PC-9 (cell line): ENCODE measurements at regions of chr4 and their contacts with region 1.

Region 1: GRCh38 chr4:140851032-140851636 is 94.9 kb upstream of the TBC1D9 start:
- DNase-seq: peak; percentile 41 to 43
- H3K4me3 ChIP-seq: no peak overlapping the region
- H3K27ac ChIP-seq: no peak overlapping the region
- H3K4me1 ChIP-seq: peaks cover 2% of the 10 kb centered on the region
- H3K27me3 ChIP-seq: no peaks in the 10 kb centered on the region
- CTCF ChIP-seq: peak; percentile 84

Region 2: DNA sequence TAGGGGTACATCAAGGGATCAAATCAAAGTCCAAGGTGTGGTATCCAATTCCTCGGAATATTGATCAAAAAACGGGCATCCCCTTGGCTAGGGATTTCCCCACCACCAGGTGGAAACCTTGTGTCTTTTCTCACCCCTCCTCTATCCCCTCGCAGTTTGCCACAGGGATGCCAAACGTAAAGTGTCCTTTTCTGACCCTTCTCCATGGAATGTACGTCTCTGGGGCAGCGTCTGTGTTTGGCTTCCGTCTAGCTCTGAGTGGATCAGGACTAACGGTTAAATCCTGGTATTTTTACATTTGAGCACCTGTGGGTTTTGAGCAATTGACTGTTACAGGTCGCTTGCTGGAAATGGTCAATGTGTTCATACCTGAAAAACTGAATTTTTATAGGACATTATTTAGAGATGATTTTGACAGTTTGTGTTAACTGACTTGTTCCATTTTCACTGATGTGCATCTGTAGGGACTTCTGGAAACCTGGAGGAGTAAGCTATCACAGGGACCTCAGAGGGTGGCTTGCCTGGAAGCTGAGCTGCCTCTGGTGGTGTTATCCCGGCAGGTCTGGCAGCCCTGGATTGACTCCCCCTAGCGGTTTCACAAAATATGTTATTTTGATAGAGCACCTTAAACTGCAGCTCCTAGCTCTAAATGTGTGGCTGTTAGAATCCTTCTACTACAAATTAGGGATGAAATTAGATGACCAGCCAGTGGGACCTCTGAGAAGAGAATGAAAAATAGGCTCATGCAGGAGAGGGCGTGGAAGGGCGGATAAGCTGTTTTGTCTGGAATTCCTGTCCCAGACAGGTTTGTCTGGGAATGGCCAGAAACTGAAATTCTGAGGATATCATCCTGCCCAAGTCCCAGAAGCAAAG is 1194.3 kb before region 1 on chr4:
- CTCF ChIA-PET with region 1: no interaction called
- POLR2A ChIA-PET with region 1: no interaction called
- intact Hi-C with region 1: loop called (anchors 1 kb)
- DNase-seq: peak in 1 of 2 experiments; percentile 53
- H3K4me3 ChIP-seq: no peak overlapping the region
- H3K27ac ChIP-seq: no peak overlapping the region
- H3K4me1 ChIP-seq: peaks cover 19% of the 10 kb centered on the region
- H3K27me3 ChIP-seq: no peaks in the 10 kb centered on the region
- CTCF ChIP-seq: peak; percentile 85

Region 3: GRCh38 chr4:140252742-140253555 is 598.2 kb before region 1 on chr4:
- CTCF ChIA-PET with region 1: no interaction called
- POLR2A ChIA-PET with region 1: no interaction called
- intact Hi-C with region 1: loop called (anchors 10 kb)
- DNase-seq: peak; percentile 40 to 76
- H3K4me3 ChIP-seq: peak overlapping the region; percentile 59
- H3K27ac ChIP-seq: peak overlapping the region; percentile 73
- H3K4me1 ChIP-seq: peaks cover 69% of the 10 kb centered on the region
- H3K27me3 ChIP-seq: no peaks in the 10 kb centered on the region
- CTCF ChIP-seq: peak; percentile 84

Region 4: GRCh38 chr4:140595065-140595464 is 256.1 kb before region 1 on chr4:
- CTCF ChIA-PET with region 1: interaction called, 5 read pairs
- POLR2A ChIA-PET with region 1: no interaction called
- intact Hi-C with region 1: loop called (anchors 1 kb)
- DNase-seq: peak; percentile 40 to 46
- H3K4me3 ChIP-seq: no peak overlapping the region
- H3K27ac ChIP-seq: no peak overlapping the region
- H3K4me1 ChIP-seq: no peaks in the 10 kb centered on the region
- H3K27me3 ChIP-seq: no peaks in the 10 kb centered on the region
- CTCF ChIP-seq: peak; percentile 67

Region 5: DNA sequence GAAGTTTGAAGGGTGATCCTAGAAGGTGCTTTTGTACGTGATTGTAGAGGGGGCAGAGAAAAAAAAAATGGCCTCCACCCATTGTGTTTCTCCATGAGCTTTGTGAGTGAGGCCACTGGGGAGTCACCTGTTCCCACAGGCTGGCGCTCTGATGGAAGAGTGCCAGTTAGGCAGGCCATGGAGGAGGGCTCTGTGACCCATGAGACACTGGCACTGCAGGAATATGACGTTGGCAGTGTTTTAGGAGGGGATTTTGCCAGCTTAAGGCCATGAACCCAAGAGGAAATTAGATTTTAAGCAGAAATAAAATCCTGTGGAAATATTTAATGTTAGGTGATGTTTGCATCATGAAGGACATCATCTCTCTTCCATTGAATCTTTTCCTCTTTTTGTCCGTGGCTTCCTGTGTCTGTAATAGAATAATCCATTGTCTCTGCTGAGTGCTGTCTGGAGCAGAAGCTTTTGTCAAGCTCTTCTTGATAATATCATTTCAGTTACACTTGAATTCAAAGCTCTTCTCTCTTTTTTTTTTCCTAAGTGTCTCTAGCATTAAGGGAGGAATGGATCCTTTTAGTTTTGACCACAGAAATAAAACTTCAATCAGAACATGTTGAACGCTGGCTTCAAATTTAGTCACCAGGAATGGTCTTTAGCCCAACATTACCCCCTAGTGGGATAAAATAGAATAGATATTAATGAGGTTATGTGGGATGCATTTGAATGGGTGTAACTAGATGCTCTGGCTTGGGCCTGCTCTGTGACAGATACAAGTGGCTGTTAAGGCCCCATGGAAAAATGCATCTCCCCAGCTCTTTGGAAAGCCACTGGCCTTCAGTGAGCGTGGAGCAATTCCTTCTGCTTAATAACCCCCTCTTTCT is 241.3 kb before region 1 on chr4:
- CTCF ChIA-PET with region 1: no interaction called
- POLR2A ChIA-PET with region 1: no interaction called
- intact Hi-C with region 1: loop called (anchors 5 kb)
- DNase-seq: no peak
- H3K4me3 ChIP-seq: no peak overlapping the region
- H3K27ac ChIP-seq: no peak overlapping the region
- H3K4me1 ChIP-seq: no peaks in the 10 kb centered on the region; the same call in 1 of the 2 replicates
- H3K27me3 ChIP-seq: no peaks in the 10 kb centered on the region
- CTCF ChIP-seq: peak; percentile 68

Region 6: GRCh38 chr4:140637836-140638235 is 213.3 kb before region 1 on chr4:
- CTCF ChIA-PET with region 1: interaction called, 10 read pairs
- POLR2A ChIA-PET with region 1: no interaction called
- intact Hi-C with region 1: loop called (anchors 5 kb)
- DNase-seq: no peak
- H3K4me3 ChIP-seq: no peak overlapping the region
- H3K27ac ChIP-seq: no peak overlapping the region
- H3K4me1 ChIP-seq: peaks cover 23% of the 10 kb centered on the region
- H3K27me3 ChIP-seq: no peaks in the 10 kb centered on the region
- CTCF ChIP-seq: peak; percentile 63